WTC11 (cell line): ENCODE measurements at regions of chr15 and their contacts with region 1.

Region 1: GRCh38 chr15:29103824-29104565 is 165.6 kb downstream of the NSMCE3 start:
- DNase-seq: peak; percentile 88
- ATAC-seq: peak; percentile 78
- H3K4me3 Mint-ChIP-seq: peak overlapping the region; percentile 31
- H3K27ac Mint-ChIP-seq: no peak overlapping the region
- H3K4me1 Mint-ChIP-seq: peaks cover 31% of the 10 kb centered on the region
- H3K27me3 Mint-ChIP-seq: no peaks in the 10 kb centered on the region
- CTCF ChIP-seq: peak; percentile 67

Region 2: GRCh38 chr15:28901987-28902745 is 201.8 kb before region 1 on chr15:
- CTCF ChIA-PET with region 1: interaction called, 10 read pairs
- POLR2A ChIA-PET with region 1: no interaction called
- DNase-seq: peak; percentile 59
- ATAC-seq: peak; percentile 86
- H3K4me3 Mint-ChIP-seq: no peak overlapping the region
- H3K27ac Mint-ChIP-seq: no peak overlapping the region
- H3K4me1 Mint-ChIP-seq: no peaks in the 10 kb centered on the region; the same call in 1 of the 2 replicates
- H3K27me3 Mint-ChIP-seq: no peaks in the 10 kb centered on the region
- CTCF ChIP-seq: peak; percentile 33; the same call in 1 of the 2 replicates

Region 3: GRCh38 chr15:28935326-28935725 is 168.7 kb before region 1 on chr15:
- CTCF ChIA-PET with region 1: interaction called, 10 read pairs
- POLR2A ChIA-PET with region 1: no interaction called
- DNase-seq: peak; percentile 81
- ATAC-seq: peak; percentile 83
- H3K4me3 Mint-ChIP-seq: no peak overlapping the region
- H3K27ac Mint-ChIP-seq: no peak overlapping the region
- H3K4me1 Mint-ChIP-seq: peaks cover 23% of the 10 kb centered on the region
- H3K27me3 Mint-ChIP-seq: no peaks in the 10 kb centered on the region
- CTCF ChIP-seq: no peak; the same call in 1 of the 2 replicates

Region 4: DNA sequence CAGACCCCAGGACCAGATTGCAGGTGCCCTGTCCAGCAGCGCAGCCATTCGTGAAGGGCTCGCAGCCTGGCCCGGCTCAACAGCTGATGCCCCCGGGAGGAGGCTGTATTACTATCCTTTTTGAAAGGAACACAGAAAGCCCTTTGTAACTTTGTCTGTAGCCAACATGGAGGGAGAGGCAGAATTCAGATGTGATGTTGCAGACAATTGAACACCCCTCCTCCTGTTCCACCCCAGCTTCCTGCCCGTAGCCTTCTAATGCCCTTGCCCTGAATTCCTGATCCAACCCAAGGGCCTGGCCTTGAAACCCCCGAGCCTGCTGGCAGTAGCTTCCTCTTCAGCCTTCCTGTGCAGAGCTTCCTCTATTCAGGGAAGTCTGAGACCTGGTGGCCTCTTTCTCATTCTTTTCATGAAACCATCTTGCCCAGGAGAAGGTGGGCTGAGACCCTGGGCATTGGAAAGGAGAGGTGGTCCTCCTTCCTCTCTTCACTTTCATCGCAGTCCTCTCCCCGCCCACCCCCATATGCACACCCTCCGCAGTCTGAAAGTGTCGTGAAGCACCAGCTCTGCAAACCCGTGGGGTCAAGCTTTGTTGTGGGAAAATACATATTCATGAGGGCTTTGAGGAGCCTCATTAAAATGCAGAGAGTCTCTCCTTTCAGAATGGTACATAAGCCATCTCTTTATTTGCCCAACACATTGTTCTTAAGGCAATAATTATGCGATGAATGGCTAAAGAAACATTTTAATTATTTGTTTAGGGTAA is 109.0 kb before region 1 on chr15:
- CTCF ChIA-PET with region 1: interaction called, 16 read pairs
- POLR2A ChIA-PET with region 1: no interaction called
- DNase-seq: no peak
- ATAC-seq: peak; percentile 50
- H3K4me3 Mint-ChIP-seq: no peak overlapping the region
- H3K27ac Mint-ChIP-seq: no peak overlapping the region
- H3K4me1 Mint-ChIP-seq: peaks cover 28% of the 10 kb centered on the region
- H3K27me3 Mint-ChIP-seq: no peaks in the 10 kb centered on the region
- CTCF ChIP-seq: no peak

Region 5: DNA sequence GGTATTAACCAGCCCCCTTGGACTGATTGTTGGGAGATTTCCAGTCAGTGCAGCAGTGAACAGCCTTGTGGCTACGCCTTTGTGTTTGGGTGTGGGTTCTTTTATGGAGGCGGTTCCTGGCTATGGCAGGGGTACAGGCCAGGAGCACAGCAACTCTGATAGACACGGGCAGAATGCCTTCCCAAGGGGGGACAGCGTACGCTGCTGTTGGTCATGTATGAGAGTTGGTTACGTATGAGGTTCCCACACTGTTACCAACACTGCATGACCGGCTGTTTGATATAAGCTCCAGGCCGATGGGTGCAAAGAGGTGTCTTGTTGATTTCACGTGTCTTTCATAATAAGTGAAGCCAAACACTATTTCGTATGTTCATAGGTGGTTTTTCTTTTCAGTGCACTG is 22.2 kb before region 1 on chr15:
- CTCF ChIA-PET with region 1: interaction called, 31 read pairs
- POLR2A ChIA-PET with region 1: no interaction called
- DNase-seq: no peak
- ATAC-seq: no peak
- H3K4me3 Mint-ChIP-seq: no peak overlapping the region
- H3K27ac Mint-ChIP-seq: no peak overlapping the region
- H3K4me1 Mint-ChIP-seq: peaks cover 8% of the 10 kb centered on the region; the same call in 1 of the 2 replicates
- H3K27me3 Mint-ChIP-seq: no peaks in the 10 kb centered on the region
- CTCF ChIP-seq: no peak

Region 6: DNA sequence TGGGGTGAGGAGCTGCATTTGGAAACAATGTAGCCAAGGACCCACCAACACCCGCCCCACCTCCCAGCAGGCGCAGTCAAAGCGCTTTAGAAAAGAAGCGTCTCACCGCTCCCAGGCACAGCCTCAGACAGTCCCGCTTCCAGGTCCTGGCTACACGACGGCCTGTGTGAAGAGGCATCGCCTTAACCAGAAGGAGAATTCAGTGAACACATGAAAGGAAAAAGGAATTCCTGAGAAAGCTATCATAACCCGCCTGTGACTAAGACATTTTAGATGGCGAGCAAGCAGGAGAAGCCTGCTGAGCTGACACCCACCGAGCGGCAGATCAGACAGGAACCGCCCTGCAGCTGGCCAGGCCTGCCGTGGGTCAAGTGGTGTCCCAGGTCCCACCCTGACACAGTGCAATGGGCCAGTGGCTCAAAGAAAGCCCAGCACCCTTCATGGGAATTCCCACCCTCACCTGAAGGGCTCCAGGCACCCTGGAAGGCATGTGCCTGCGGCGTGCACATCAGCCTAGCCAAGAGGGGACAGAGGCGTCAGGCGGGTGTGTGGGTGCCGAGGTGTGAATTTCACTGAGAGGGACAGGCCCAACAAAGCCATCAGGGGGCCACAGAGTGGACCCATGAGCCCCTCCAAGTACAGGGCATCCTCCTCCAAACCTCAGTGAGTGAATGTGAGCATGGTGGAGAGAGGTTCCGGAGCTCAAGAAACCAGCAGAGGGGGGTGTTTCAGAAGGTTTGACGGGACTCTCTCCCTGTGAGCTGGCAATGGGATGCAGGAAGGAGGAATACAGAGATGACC is 20.8 kb after region 1 on chr15:
- CTCF ChIA-PET with region 1: interaction called, 196 read pairs
- POLR2A ChIA-PET with region 1: no interaction called
- DNase-seq: no peak
- ATAC-seq: peak; percentile 20; the same call in 1 of the 2 replicates
- H3K4me3 Mint-ChIP-seq: no peak overlapping the region
- H3K27ac Mint-ChIP-seq: no peak overlapping the region
- H3K4me1 Mint-ChIP-seq: peaks cover 12% of the 10 kb centered on the region
- H3K27me3 Mint-ChIP-seq: no peaks in the 10 kb centered on the region; the same call in 1 of the 2 replicates
- CTCF ChIP-seq: no peak

Region 7: GRCh38 chr15:29345549-29346525 is 241.8 kb after region 1 on chr15:
- CTCF ChIA-PET with region 1: interaction called, 13 read pairs
- POLR2A ChIA-PET with region 1: no interaction called
- DNase-seq: peak; percentile 74
- ATAC-seq: peak; percentile 91
- H3K4me3 Mint-ChIP-seq: peak overlapping the region; percentile 63
- H3K27ac Mint-ChIP-seq: peak overlapping the region; percentile 88
- H3K4me1 Mint-ChIP-seq: peaks cover 74% of the 10 kb centered on the region
- H3K27me3 Mint-ChIP-seq: no peaks in the 10 kb centered on the region
- CTCF ChIP-seq: no peak